ENCODE measurements at regions of chrX and their contacts with region 1.

Region 1: DNA sequence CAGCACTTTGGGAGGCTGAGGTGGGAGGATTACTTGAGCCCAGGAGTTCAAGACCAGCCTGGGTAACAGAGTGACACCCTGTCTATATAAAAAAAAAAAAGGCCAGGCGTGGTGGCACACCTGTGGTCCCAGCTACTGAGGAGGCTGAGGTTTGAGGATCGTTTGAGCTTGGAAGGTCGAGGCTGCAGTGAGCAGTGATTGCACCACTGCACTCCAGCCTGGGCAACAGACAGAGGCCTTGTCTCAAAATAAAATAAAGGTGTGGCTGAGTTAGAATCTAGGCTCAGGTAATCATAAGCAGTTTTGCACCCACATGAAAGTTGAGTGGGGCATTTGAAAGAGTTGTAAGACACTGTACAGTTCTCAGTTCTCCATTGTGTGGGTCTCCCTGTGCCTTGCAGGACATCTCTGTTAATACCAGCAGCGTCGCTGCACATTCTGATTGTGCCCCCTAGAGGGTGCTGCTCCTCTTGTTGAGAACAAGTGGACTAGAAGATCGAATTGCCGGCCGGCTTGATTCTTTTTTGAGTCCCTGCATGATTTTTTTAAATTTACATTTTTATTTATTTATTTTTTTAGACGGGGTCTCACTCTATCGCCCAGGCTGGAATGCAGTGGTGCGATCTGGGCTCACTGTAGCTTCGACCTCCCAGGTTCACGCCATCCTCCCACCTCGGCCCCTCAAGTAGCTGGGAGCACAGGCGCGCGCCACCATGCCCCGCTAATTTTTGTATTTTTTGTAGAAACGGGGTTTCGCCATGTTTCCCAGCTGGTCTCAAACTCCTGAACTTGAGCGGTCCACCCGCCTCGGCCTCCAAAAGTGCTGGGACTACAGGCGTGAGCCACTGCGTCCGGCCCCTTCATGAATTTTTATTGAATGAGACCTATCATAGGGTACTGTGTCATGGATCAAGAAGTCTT is 73.6 kb upstream of the RBMX start:
- H3K4me3 Mint-ChIP-seq: no peak overlapping the region
- H3K27ac Mint-ChIP-seq: no peak overlapping the region
- H3K4me1 Mint-ChIP-seq: no peaks in the 10 kb centered on the region
- H3K27me3 Mint-ChIP-seq: no peaks in the 10 kb centered on the region

Region 2: DNA sequence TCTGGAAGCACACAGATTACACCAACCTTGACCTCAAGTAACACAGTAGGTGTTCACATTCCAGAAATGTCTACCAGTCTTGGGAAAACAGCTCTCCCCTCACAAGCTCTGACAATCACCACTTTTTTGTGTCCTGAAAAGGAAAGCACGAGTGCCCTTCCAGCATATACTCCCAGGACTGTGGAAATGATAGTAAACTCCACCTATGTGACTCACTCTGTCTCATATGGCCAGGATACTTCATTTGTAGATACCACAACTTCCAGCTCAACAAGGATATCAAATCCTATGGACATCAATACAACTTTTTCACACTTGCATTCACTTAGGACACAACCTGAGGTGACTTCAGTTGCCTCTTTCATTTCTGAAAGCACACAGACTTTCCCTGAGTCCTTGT is 606.4 kb before region 1 on chrX:
- intact Hi-C with region 1: no loop called
- H3K4me3 Mint-ChIP-seq: no peak overlapping the region
- H3K27ac Mint-ChIP-seq: no peak overlapping the region
- H3K4me1 Mint-ChIP-seq: no peaks in the 10 kb centered on the region
- H3K27me3 Mint-ChIP-seq: no peaks in the 10 kb centered on the region

Region 3: DNA sequence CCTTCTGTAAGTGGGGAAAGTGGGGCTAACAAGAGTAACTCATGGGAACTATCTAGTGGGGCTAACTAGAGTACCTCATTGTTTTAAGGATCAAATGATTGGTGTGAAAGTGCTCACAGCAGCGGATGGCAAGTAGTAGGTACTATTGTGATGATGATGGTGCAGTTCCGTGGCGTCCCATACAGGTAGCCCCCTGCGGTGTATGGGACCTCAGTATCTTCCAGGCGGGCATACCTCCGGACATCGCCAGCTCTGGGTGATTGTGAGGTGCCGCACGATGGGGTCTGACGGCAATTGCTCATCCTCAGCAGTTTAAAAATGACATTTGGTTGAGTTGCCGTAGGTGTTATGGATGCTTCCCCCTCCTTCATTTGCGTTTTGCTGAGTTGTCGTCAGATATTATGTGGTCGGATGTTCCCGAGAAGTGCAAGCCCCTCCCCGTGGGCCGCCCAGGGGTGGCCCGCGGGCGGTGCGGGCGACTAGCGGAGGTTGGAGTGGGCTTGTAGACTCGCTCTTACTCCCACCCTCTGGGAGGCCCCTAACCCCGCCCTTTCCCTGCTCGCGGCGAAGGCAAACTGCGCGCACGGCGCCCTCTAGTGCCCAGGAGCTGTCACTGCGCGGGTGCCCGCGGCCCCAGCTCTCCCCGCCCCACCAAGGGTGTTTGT is 98.0 kb after region 1 on chrX:
- intact Hi-C with region 1: loop called (anchors 2 kb)
- H3K4me3 Mint-ChIP-seq: peak overlapping the region; percentile 72
- H3K27ac Mint-ChIP-seq: no peak overlapping the region
- H3K4me1 Mint-ChIP-seq: peaks cover 13% of the 10 kb centered on the region
- H3K27me3 Mint-ChIP-seq: peaks cover 51% of the 10 kb centered on the region

Region 4: GRCh38 chrX:137194164-137194563 is 240.0 kb after region 1 on chrX:
- intact Hi-C with region 1: loop called (anchors 5 kb)
- H3K4me3 Mint-ChIP-seq: no peak overlapping the region
- H3K27ac Mint-ChIP-seq: no peak overlapping the region
- H3K4me1 Mint-ChIP-seq: no peaks in the 10 kb centered on the region
- H3K27me3 Mint-ChIP-seq: no peaks in the 10 kb centered on the region